Ovary (tissue), 10 donors: ENCODE measurements at regions of chr22 and their contacts with region 1.

Region 1: GRCh38 chr22:44701824-44702478 is at the start of gene PRR5:
- DNase-seq: peak; percentile 79 to 89 (median 87)
- H3K4me3 ChIP-seq: peak within 1 kb of the TSS; percentile 51
- H3K27ac ChIP-seq: peak within 1 kb of the TSS; percentile 27 to 43
- H3K4me1 ChIP-seq: peaks cover 13% of the 10 kb centered on the region
- H3K27me3 ChIP-seq: no peaks in the 10 kb centered on the region
- CTCF ChIP-seq: no peak
- EP300 ChIP-seq: no peak
- POLR2A ChIP-seq: no peak
- total RNA-seq, gene PRR5: 6.7 to 21.1 (median 16.8) TPM

Region 2: DNA sequence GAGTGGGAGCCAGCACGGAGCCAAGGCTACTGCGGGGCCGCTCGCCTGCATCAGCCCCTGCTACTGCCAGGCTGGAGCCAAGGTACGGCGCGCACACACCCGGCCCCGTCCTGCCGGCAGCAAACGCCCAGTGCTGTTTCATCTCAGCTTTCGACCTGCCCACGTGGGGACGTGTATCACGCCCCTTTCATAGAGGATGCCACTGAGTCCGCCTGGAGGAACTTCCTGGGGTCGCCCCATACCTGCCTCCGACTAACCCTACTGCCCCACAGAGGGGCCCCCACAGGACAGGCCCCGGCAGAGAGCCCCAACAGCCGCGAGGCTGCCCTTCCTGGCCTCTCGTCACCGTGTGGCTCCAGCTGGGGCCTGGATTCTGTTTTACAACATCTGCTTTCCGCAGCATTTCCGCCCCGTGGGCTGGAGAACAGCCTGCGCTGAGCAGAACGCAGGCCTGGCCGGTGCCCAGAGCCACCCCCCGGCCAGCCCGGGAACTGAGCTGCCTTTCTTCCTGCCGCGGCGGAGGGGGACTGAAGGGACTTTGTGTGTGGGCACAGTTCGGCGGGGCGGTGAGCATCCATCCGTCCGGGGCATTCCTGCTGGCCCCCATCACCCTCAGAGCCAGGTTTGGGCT is 27.6 kb after region 1 on chr22:
- intact Hi-C with region 1: loop called in 2 of 4 experiments (anchors 2 kb)
- DNase-seq: peak; percentile 75 to 87 (median 76)
- H3K4me3 ChIP-seq: no peak overlapping the region
- H3K27ac ChIP-seq: peak overlapping the region; percentile 43 to 66
- H3K4me1 ChIP-seq: peaks cover 9% of the 10 kb centered on the region
- H3K27me3 ChIP-seq: no peaks in the 10 kb centered on the region
- CTCF ChIP-seq: peak in 2 of 3 donors; percentile 31 to 38
- EP300 ChIP-seq: no peak
- POLR2A ChIP-seq: no peak

Region 3: DNA sequence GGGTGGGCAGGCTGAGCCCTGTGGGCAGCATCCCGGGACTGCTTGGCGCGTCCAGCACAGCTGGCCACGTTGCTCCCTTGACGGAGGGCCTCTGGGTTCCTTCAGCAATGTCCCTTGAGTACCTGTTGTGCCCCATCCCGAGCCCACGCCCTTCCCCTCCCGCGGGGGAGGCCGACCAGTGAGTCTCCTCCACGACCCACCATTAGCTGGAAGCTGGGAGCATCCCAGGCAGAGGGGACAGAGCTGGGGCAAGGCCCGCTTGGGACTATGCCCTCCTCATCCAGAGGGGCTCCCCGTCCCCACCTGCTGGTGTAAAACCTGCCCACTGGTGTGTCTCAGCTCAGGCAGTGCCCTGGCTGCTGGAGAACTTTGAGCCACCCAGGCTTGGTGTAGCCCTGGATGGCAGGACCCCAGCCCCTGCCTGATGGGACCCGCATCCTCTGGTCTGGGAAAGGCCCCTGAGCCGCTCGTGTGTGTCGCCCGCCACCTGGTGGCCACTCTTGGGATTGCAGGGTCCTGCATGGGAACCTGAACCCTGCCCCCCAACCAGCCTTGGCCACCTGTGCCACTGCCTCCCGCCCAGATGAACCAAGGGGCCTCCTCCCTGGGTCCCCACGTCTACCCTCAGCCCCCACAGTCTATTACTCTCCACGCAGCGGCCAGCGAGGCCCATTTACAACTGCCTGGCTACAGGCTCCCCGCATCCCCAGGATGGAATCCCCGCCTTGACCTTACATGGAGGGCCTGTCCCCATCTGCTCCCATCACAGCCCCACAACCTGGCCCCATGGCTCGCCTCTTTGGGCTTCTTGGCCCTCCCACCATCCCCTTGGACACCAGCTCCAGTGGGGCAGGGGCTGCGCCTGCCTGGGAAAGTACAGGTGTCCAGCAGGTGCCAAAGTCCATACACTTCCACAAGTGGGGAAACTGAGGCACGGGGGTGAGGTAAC is 33.9 kb after region 1 on chr22:
- intact Hi-C with region 1: loop called (anchors 1 to 2 kb)
- DNase-seq: peak; percentile 69 to 87 (median 83)
- H3K4me3 ChIP-seq: no peak overlapping the region
- H3K27ac ChIP-seq: no peak overlapping the region
- H3K4me1 ChIP-seq: no peaks in the 10 kb centered on the region
- H3K27me3 ChIP-seq: no peaks in the 10 kb centered on the region
- CTCF ChIP-seq: peak; percentile 95 to 99 (median 98)
- EP300 ChIP-seq: no peak
- POLR2A ChIP-seq: no peak

Region 4: DNA sequence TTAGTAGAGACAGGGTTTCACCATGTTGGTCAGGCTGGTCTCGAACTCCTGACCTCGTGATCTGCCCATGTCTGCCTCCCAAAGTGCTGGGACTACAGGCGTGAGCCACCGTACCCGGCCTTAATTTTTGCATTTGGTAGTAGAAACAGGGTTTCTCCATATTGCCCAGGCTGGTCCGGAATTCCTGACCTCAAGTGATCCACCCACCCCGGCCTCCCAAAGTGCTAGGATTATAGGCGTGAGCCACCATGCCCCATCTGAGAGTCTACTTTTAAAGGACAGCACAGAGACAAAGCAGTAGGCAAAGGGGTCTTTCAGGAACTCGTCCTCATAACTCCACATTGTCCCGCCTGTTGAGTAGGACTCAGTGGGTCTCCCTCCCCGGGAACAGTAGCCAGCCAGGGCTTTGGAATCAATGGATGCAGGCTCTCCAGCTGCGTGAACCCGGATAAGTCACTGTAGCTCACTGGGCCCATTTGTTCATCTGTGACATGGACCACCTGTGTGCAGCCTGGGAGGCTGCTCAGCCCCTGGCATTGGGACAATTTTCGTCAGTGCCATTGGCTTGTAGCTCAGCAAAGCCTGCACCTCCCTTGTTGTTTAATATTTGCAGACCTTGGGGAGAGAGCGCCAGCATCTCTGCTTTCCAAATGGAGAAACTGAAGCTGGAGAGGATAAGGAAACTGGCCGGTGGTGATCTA is 136.5 kb after region 1 on chr22:
- intact Hi-C with region 1: no loop called
- DNase-seq: peak in 3 of 5 donors; percentile 51 to 65 (median 61)
- H3K4me3 ChIP-seq: no peak overlapping the region
- H3K27ac ChIP-seq: no peak overlapping the region
- H3K4me1 ChIP-seq: peaks cover 3% of the 10 kb centered on the region
- H3K27me3 ChIP-seq: no peaks in the 10 kb centered on the region
- CTCF ChIP-seq: no peak
- EP300 ChIP-seq: no peak
- POLR2A ChIP-seq: no peak

Region 5: GRCh38 chr22:45091254-45091854 is 389.4 kb after region 1 on chr22:
- intact Hi-C with region 1: loop called in 1 of 4 experiments (anchors 5 kb)
- DNase-seq: no peak
- H3K4me3 ChIP-seq: no peak overlapping the region
- H3K27ac ChIP-seq: no peak overlapping the region
- H3K4me1 ChIP-seq: no peaks in the 10 kb centered on the region
- H3K27me3 ChIP-seq: no peaks in the 10 kb centered on the region
- CTCF ChIP-seq: no peak
- EP300 ChIP-seq: no peak
- POLR2A ChIP-seq: no peak

Region 6: DNA sequence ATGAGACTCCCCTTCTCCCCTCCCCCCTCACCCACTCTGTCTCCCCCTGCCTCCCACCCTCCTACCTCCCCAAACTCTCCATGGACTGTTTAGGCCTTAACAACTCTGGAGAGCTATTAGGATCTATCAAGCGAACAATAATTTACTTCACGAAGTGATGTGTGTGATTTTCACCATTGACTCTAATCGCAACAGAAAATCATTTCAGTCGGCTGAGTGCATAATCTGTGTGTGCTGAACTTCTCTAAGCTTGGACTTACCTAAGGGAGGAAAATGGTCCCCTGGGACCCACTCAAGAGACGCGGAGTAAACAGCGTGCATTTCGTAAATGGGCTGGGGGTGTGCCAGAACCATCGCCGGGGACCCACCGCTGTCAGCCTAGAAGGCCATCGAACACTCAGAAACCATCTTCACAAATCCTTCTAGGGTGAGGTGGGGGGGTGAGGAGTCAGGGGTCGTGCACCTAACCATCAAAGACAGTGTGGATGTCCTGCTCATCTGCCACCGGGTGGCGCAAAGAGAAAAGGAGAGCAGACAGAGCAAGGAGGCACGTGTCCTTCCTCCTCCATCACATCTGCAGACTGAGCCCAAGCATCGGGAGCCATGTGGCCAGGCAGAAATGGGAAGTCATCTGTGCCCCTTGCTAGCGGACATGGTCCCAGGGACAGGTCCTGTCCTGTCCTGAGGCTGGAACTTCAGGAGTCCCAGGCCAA is 399.7 kb after region 1 on chr22:
- intact Hi-C with region 1: no loop called
- DNase-seq: peak; percentile 23 to 52 (median 40)
- H3K4me3 ChIP-seq: no peak overlapping the region
- H3K27ac ChIP-seq: no peak overlapping the region
- H3K4me1 ChIP-seq: no peaks in the 10 kb centered on the region
- H3K27me3 ChIP-seq: no peaks in the 10 kb centered on the region
- CTCF ChIP-seq: no peak
- EP300 ChIP-seq: no peak
- POLR2A ChIP-seq: no peak